PC-9 (cell line): ENCODE measurements at regions of chr13 and their contacts with region 1.

Region 1: GRCh38 chr13:95734124-95734523 is 57.2 kb downstream of the DNAJC3 start:
- DNase-seq: no peak
- H3K4me3 ChIP-seq: no peak overlapping the region
- H3K27ac ChIP-seq: no peak overlapping the region
- H3K4me1 ChIP-seq: no peaks in the 10 kb centered on the region
- H3K27me3 ChIP-seq: no peaks in the 10 kb centered on the region
- CTCF ChIP-seq: no peak

Region 2: DNA sequence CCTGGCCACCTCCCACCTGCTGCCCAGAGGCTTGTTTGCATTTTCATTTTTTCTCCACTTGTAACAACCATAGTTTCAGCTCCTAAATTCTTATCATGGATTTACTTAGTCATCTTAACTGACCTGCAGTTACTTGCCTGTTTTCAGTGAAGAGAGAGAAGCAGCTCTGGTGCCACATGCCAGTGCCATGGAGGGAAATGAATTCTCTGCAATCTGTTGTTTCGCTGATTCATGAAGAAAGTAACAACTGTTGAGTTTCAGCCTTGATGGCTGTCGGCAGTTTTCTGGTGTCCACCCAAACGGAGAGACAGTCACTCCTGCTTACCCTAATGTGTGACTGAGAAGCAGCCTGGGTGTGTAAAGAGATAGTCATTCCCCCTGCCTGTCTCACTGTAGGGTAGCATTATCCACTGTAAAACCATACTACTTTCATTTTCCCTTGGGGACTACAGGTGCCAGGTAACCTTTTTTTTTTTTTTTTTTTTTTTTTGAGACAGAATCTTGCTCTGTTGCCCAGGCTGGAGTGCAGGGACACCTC is 59.0 kb after region 1 on chr13:
- CTCF ChIA-PET with region 1: no interaction called
- POLR2A ChIA-PET with region 1: interaction called, 30 read pairs
- intact Hi-C with region 1: no loop called
- DNase-seq: no peak
- H3K4me3 ChIP-seq: no peak overlapping the region
- H3K27ac ChIP-seq: no peak overlapping the region
- H3K4me1 ChIP-seq: no peaks in the 10 kb centered on the region
- H3K27me3 ChIP-seq: no peaks in the 10 kb centered on the region
- CTCF ChIP-seq: no peak

Region 3: DNA sequence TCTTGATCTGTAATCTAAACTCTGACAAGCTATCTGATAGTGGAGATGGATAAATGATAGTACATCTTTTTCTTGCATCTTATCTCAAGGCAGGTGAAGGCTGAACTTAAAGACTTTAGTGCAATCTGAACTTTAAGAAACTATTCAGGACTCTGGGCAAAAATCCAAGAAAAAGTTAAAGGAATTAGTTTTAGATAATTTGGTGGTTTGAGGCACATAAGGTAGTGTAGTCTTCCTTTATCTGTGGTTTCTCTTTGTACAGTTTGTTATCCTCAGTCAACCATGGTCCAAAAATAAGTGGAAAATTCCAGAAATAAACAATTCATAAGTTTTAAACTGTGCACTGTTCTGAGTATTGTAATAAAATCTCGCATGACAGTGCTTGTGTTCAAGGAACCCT is 146.2 kb after region 1 on chr13:
- CTCF ChIA-PET with region 1: interaction called, 14 read pairs
- POLR2A ChIA-PET with region 1: no interaction called
- intact Hi-C with region 1: no loop called
- DNase-seq: no peak
- H3K4me3 ChIP-seq: no peak overlapping the region
- H3K27ac ChIP-seq: no peak overlapping the region
- H3K4me1 ChIP-seq: no peaks in the 10 kb centered on the region
- H3K27me3 ChIP-seq: no peaks in the 10 kb centered on the region
- CTCF ChIP-seq: no peak